Activated CD4-positive, alpha-beta memory T cell treated with anti-CD3 and anti-CD28 coated beads for 36 hours (primary cell): ENCODE measurements at regions of chrX and their contacts with region 1.

Region 1: GRCh38 chrX:30831082-30831481 is 58.0 kb downstream of the TAB3 start:
- DNase-seq: peak; percentile 58
- H3K4me3 Mint-ChIP-seq: no peak overlapping the region
- H3K27ac Mint-ChIP-seq: no peak overlapping the region
- H3K4me1 Mint-ChIP-seq: peaks cover 29% of the 10 kb centered on the region
- H3K27me3 Mint-ChIP-seq: no peaks in the 10 kb centered on the region

Region 2: DNA sequence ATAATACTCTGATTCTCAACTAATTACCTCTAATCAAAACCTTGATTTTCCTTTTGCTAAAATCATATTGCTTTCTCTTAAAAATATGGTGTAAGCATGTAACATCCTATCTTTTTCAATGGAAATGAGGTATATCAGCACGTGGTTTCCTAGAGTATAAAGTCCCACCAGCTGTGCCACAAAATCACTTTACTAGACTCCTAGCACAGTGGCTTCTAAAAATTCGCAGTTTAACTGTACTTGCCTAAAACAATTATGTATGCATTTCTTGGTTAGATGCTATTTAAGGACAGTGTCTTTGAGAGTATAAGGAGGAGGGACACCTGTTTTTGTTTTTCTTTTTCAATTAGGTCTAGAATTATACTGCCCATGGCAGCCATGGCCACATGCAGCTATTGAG is 115.1 kb before region 1 on chrX:
- CTCF ChIA-PET with region 1: no interaction called
- POLR2A ChIA-PET with region 1: no interaction called
- intact Hi-C with region 1: no loop called
- DNase-seq: no peak
- H3K4me3 Mint-ChIP-seq: no peak overlapping the region
- H3K27ac Mint-ChIP-seq: no peak overlapping the region
- H3K4me1 Mint-ChIP-seq: peaks cover 26% of the 10 kb centered on the region
- H3K27me3 Mint-ChIP-seq: no peaks in the 10 kb centered on the region

Region 3: DNA sequence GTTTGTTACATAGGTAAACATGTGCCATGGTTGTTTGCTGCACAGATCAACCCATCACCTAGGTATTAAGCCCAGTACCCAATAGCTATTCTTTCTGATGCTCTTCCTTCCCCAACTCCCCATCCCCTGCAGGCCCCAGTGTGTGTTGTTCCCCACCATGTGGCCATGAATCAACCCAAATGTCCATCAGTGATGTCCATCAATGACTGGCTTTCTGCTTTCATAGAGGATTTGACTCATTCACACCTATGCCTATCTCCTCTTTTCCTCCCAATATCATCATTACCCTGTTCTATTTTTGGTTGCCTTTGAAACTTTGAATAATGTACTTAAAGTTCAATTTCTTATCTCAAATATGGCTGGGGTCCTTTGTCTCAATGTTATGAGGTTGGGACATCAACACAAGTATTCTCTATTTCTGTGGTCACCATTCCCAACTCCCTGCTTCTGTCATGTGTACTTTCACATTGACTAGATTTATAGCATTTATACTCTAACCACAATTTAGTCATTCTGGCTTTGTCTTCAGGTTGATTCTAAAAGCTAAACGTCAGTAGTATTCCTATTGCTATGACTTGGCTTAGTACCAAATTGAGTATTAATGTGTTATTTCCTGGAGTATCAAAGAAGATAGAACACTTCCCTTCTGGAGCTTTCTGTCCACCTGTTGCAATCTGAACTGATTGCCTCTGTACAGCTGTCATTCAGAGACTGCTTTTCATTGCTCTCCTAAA is 49.2 kb before region 1 on chrX:
- CTCF ChIA-PET with region 1: no interaction called
- POLR2A ChIA-PET with region 1: interaction called, 3 read pairs
- intact Hi-C with region 1: loop called (anchors 1 kb)
- DNase-seq: no peak
- H3K4me3 Mint-ChIP-seq: no peak overlapping the region
- H3K27ac Mint-ChIP-seq: no peak overlapping the region
- H3K4me1 Mint-ChIP-seq: peaks cover 15% of the 10 kb centered on the region
- H3K27me3 Mint-ChIP-seq: peaks cover 11% of the 10 kb centered on the region